ENCODE measurements at regions of chr20 and their contacts with region 1.

Region 1: DNA sequence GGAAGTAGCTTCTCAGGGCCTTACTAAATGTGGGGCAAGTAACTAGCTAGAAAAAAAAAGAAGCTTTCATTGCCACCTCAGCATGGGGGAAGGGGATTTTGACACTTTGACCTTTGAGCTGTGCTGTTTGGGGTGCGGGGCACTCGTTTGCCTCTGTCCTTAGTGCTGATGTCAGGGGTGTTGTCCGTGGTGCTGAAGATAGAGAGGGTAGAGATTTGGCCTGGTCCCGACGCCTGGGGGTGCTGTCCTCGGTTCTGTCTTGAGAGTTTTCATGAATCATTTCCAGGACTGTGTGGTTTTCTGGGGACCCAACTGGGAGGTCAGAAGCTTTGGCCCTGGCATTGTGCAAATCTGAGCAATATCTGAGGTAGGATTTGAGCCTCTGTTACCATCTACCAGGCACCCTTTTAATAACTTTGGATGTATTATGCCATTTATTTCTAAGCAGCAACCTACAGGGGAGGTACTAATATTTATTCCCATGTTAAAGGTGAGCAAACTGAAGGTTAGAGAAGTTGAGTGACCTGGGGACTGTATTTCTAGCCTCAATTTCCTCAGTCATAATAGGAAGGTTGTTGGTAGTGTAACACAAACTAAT is 78.0 kb downstream of the DLGAP4 start:
- DNase-seq: no peak
- H3K4me3 ChIP-seq: no peak overlapping the region
- H3K27ac ChIP-seq: no peak overlapping the region
- H3K4me1 ChIP-seq: no peaks in the 10 kb centered on the region
- H3K27me3 ChIP-seq: peaks cover 0 to 3% (median 0%) of the 10 kb centered on the region in 3 donors
- CTCF ChIP-seq: no peak
- EP300 ChIP-seq: no peak
- POLR2A ChIP-seq: no peak

Region 2: GRCh38 chr20:36908603-36909002 is 524.5 kb after region 1 on chr20:
- intact Hi-C with region 1: loop called (anchors 10 kb)
- DNase-seq: no peak
- H3K4me3 ChIP-seq: no peak overlapping the region
- H3K27ac ChIP-seq: no peak overlapping the region
- H3K4me1 ChIP-seq: no peaks in the 10 kb centered on the region
- H3K27me3 ChIP-seq: no peaks in the 10 kb centered on the region
- CTCF ChIP-seq: no peak
- EP300 ChIP-seq: no peak
- POLR2A ChIP-seq: no peak